Activated naive CD4-positive, alpha-beta T cell treated with anti-CD3 and anti-CD28 coated beads for 36 hours (primary cell): ENCODE measurements at regions of chr14 and their contacts with region 1.

Region 1: DNA sequence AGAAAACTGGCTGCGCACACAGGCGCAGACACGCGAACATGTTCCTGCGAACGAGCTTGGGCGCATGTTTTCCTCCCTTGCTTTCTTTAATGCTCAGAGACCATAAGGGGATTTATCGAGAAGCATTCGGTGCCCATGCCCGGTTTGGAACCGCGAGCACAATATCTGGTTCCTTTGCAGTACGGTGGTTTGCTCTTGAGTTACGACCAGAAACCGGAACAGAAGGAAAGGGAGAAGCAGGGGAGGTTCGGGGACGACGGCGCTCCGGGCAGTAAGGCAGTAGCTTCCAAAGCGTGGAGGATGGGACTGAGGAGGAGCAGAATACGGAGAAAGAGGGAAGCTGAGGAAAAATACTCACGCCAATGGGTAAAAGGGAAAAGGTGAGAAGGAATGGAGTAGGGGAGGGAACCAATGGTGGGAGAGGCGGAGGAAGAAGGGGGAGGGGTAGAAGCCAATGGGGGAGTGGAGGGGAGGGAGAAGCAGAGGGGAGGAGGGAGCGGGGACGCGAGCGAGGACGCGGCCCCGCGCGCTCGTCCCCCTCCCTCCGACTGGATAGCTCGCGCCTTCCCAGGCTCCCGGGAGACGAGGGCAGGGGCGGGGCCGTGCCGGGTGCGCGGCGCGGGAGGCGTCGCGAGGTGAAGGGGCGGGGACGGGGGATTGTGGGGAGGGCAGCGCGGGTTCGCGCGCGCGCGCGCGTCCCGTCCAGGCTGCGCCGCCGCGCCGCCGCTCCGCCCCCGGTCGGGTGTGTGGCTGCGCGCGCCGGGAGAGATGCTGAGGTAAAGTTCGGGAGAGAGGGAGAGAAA is 625 bp upstream of the ARHGAP5 start:
- DNase-seq: peak; percentile 81
- H3K4me3 Mint-ChIP-seq: peak overlapping the region; percentile 95
- H3K27ac Mint-ChIP-seq: peak overlapping the region; percentile 89
- H3K4me1 Mint-ChIP-seq: peaks cover 31% of the 10 kb centered on the region
- H3K27me3 Mint-ChIP-seq: peaks cover 2% of the 10 kb centered on the region

Region 2: GRCh38 chr14:31026395-31027118 is 1049.9 kb before region 1 on chr14:
- CTCF ChIA-PET with region 1: no interaction called
- intact Hi-C with region 1: loop called (anchors 2 kb)
- DNase-seq: peak; percentile 92
- H3K4me3 Mint-ChIP-seq: peak overlapping the region; percentile 96
- H3K27ac Mint-ChIP-seq: peak overlapping the region; percentile 96
- H3K4me1 Mint-ChIP-seq: peaks cover 55% of the 10 kb centered on the region
- H3K27me3 Mint-ChIP-seq: no peaks in the 10 kb centered on the region

Region 3: DNA sequence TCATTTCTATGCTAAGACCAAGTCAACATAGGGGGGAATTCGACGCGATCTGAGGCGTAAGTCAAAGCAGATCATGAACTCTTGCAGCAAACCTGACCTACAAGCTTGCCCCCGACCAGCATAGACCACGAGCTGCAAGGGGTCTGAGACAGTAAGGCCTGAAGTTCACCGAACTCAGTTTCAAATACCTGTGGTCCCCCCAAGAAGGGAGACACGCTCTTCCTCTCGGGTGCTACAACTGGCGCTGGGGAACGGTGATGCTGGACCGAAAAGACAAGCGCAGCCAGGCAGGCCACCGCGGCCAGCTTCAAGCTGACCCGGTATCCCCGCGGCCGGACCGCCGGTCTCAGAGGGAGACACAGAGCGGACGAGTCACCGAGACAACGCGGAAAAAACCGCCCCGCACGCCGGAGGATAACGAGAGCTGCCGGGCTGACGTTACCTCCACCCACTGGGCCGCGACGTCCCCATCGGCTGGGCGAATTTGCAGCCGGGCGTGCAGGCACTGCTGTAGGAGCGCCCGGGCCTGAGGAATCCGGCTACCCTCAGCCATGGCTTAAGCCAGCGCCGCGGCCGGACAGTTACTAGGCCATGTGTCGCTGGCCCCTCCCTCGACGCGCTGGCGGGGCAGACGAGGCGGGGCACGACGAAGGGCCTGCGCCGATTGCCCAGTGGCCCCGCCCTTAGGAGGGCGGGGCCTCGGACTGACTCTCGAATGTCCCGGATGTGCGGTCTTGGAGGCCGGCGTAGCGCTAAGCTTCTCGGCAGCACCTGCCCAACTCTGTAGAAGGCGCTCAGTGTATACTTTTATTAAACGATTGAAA is 619.4 kb before region 1 on chr14 and contains the start of gene DTD2:
- CTCF ChIA-PET with region 1: no interaction called
- intact Hi-C with region 1: loop called (anchors 1 kb)
- DNase-seq: peak; percentile 93
- H3K4me3 Mint-ChIP-seq: peak within 1 kb of the TSS; percentile 94
- H3K27ac Mint-ChIP-seq: peak within 1 kb of the TSS; percentile 88
- H3K4me1 Mint-ChIP-seq: peaks cover 29% of the 10 kb centered on the region
- H3K27me3 Mint-ChIP-seq: no peaks in the 10 kb centered on the region
- total RNA-seq, gene DTD2: 12.9 to 13.3 TPM

Region 4: GRCh38 chr14:31926123-31926522 is 150.4 kb before region 1 on chr14:
- CTCF ChIA-PET with region 1: interaction called, 9 read pairs
- intact Hi-C with region 1: loop called (anchors 1 kb)
- DNase-seq: peak; percentile 28
- H3K4me3 Mint-ChIP-seq: no peak overlapping the region
- H3K27ac Mint-ChIP-seq: no peak overlapping the region
- H3K4me1 Mint-ChIP-seq: peaks cover 21% of the 10 kb centered on the region
- H3K27me3 Mint-ChIP-seq: no peaks in the 10 kb centered on the region

Region 5: GRCh38 chr14:32004300-32004699 is 72.2 kb before region 1 on chr14:
- CTCF ChIA-PET with region 1: no interaction called
- intact Hi-C with region 1: no loop called
- DNase-seq: no peak
- H3K4me3 Mint-ChIP-seq: no peak overlapping the region
- H3K27ac Mint-ChIP-seq: no peak overlapping the region
- H3K4me1 Mint-ChIP-seq: no peaks in the 10 kb centered on the region
- H3K27me3 Mint-ChIP-seq: no peaks in the 10 kb centered on the region

Region 6: GRCh38 chr14:32192712-32193373 is 116.4 kb after region 1 on chr14:
- CTCF ChIA-PET with region 1: interaction called, 3 read pairs
- intact Hi-C with region 1: loop called (anchors 1 kb)
- DNase-seq: peak; percentile 23
- H3K4me3 Mint-ChIP-seq: no peak overlapping the region
- H3K27ac Mint-ChIP-seq: no peak overlapping the region
- H3K4me1 Mint-ChIP-seq: peaks cover 14% of the 10 kb centered on the region
- H3K27me3 Mint-ChIP-seq: no peaks in the 10 kb centered on the region

Region 7: DNA sequence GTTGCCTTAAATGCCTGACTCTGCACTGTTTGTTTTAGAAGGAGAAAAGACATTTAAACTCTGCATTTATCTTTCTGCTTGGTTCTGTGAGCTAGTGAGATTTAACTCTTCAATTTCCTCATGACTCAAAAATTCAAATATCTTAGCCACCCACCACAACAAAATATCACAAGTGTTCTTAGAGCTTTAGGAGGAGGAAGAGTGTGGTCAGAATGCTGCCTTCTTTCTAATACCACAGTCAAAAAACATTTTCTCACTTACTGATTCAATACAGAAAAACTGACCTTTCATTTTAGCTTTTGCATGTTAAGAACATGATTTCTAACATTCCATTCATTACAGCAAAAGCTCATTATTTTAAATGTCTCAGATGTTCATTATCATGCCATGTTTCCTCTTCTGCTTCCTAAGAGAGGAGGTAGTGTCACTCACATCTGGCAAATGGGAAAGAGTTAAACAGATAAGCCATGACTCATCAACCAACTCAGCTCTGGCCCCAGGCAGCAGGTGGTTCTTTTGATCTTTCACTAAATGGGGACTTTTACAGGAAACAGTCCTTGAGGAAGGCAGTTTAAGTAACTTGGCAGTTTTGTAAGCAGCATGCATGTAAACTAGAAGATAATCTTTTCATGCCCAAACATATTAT is 183.0 kb after region 1 on chr14:
- CTCF ChIA-PET with region 1: interaction called, 159 read pairs
- intact Hi-C with region 1: no loop called
- DNase-seq: peak; percentile 28
- H3K4me3 Mint-ChIP-seq: no peak overlapping the region
- H3K27ac Mint-ChIP-seq: no peak overlapping the region
- H3K4me1 Mint-ChIP-seq: peaks cover 10% of the 10 kb centered on the region
- H3K27me3 Mint-ChIP-seq: no peaks in the 10 kb centered on the region

Region 8: GRCh38 chr14:32513571-32514009 is 437.1 kb after region 1 on chr14:
- CTCF ChIA-PET with region 1: interaction called, 4 read pairs
- intact Hi-C with region 1: loop called (anchors 2 kb)
- DNase-seq: no peak
- H3K4me3 Mint-ChIP-seq: no peak overlapping the region
- H3K27ac Mint-ChIP-seq: no peak overlapping the region
- H3K4me1 Mint-ChIP-seq: no peaks in the 10 kb centered on the region
- H3K27me3 Mint-ChIP-seq: peaks cover 2% of the 10 kb centered on the region